Kidney (tissue), 22 donors: ENCODE measurements at regions of chr1 and their contacts with region 1.

Region 1: DNA sequence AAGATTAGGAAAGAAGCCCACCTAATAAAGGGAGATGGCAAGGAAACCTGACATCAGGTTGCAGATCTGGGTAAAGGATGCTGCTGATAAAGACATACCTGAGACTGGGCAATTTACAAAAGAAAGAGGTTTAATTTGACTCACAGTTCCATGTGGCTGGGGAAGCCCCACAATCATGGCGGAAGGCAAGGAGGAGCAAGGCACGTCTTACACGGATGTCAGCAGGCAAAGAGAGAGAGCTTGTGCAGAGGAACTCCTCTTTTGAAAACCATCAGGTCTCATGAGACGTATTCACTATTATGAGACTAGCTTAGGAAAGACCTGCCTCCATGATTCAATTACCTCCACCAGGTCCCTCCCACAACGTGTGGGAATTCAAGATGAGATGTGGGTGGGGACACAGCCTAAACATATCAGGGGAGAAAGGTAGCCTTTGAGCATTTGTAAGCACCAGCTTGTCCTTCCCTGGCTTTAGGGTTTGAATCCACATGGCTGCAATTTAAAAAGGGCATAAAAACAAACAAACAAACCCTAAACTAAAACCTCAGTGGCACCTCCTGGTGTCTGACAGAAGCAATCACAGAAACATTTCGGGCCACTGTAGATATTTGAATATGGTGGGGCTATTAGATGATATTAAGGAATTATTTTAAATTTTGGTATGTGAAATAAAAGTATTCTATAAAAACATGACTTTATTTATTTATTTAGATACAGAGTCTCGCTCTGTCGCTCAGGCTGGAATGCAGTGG is 33.1 kb downstream of the SLC2A7 start:
- DNase-seq: peak in 1 of 5 donors; percentile 7
- H3K4me3 ChIP-seq: no peak overlapping the region
- H3K27ac ChIP-seq: no peak overlapping the region
- H3K4me1 ChIP-seq: no peaks in the 10 kb centered on the region
- H3K27me3 ChIP-seq: no peaks in the 10 kb centered on the region
- CTCF ChIP-seq: no peak

Region 2: DNA sequence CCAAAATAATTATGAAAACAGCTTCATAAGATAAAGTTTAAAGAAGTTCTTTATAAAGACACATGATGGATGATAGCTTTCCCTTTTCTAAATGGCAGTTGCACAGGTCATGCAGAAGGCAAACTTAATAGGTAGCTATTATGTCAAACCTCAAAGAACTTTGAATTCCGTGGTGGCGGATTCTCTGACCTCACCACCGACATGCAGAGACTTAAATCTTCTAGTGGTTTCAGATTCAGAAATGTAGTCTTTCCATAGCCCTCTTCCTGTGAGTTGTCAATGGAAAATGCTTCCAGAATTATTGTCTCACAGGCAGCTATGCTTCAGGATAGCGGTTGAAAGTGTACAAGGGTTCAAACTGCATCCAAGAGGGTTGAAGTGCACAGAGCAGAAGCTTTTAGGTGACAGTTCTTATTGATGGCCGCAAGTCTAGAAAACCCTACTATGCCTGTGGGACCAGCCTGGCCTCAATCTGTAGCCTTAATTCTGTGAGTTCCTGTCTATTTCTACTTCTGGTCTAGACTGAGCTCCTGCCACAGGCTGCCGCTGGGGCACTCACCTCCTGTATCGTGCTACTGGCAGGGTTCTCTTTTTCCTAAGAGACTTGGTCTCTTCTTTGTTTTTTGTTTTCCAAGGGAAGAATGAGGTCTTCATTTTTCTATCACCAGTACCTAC is 850.0 kb before region 1 on chr1:
- intact Hi-C with region 1: no loop called
- DNase-seq: peak in 2 of 5 donors; percentile 22 to 45
- H3K4me3 ChIP-seq: no peak overlapping the region
- H3K27ac ChIP-seq: no peak overlapping the region
- H3K4me1 ChIP-seq: no peaks in the 10 kb centered on the region
- H3K27me3 ChIP-seq: no peaks in the 10 kb centered on the region
- CTCF ChIP-seq: no peak

Region 3: GRCh38 chr1:8925406-8925805 is 67.7 kb before region 1 on chr1:
- intact Hi-C with region 1: loop called (anchors 10 kb)
- DNase-seq: no peak
- H3K4me3 ChIP-seq: no peak overlapping the region
- H3K27ac ChIP-seq: no peak overlapping the region
- H3K4me1 ChIP-seq: no peaks in the 10 kb centered on the region
- H3K27me3 ChIP-seq: no peaks in the 10 kb centered on the region
- CTCF ChIP-seq: no peak

Region 4: GRCh38 chr1:9101510-9102146 is 108.5 kb after region 1 on chr1:
- intact Hi-C with region 1: no loop called
- DNase-seq: peak; percentile 55 to 80 (median 70)
- H3K4me3 ChIP-seq: no peak overlapping the region
- H3K27ac ChIP-seq: no peak overlapping the region
- H3K4me1 ChIP-seq: peaks cover 0 to 3% (median 0%) of the 10 kb centered on the region in 3 donors
- H3K27me3 ChIP-seq: no peaks in the 10 kb centered on the region
- CTCF ChIP-seq: peak; percentile 50

Region 5: GRCh38 chr1:9161963-9162362 is 168.9 kb after region 1 on chr1:
- intact Hi-C with region 1: no loop called
- DNase-seq: peak in 1 of 5 donors; percentile 63
- H3K4me3 ChIP-seq: no peak overlapping the region
- H3K27ac ChIP-seq: peak overlapping the region in 1 of 2 donors; percentile 64
- H3K4me1 ChIP-seq: peaks cover 0 to 10% (median 10%) of the 10 kb centered on the region in 3 donors
- H3K27me3 ChIP-seq: no peaks in the 10 kb centered on the region
- CTCF ChIP-seq: no peak